Astrocyte of the cerebellum (primary cell): ENCODE measurements at regions of chr21 and their contacts with region 1.

Region 1: GRCh38 chr21:26169061-26169610 is 1.4 kb downstream of the APP start:
- DNase-seq: peak; percentile 55
- H3K4me3 ChIP-seq: peak overlapping the region; percentile 92
- CTCF ChIP-seq: peak; percentile 61

Region 2: GRCh38 chr21:26127918-26128317 is 41.2 kb before region 1 on chr21:
- in situ Hi-C with region 1: loop called (anchors 5 kb)
- DNase-seq: no peak
- H3K4me3 ChIP-seq: no peak overlapping the region
- CTCF ChIP-seq: no peak